Activated B cell treated with CpG ODN at 0.5 μM for 24 hours (primary cell): ENCODE measurements at regions of chr9 and their contacts with region 1.

Region 1: DNA sequence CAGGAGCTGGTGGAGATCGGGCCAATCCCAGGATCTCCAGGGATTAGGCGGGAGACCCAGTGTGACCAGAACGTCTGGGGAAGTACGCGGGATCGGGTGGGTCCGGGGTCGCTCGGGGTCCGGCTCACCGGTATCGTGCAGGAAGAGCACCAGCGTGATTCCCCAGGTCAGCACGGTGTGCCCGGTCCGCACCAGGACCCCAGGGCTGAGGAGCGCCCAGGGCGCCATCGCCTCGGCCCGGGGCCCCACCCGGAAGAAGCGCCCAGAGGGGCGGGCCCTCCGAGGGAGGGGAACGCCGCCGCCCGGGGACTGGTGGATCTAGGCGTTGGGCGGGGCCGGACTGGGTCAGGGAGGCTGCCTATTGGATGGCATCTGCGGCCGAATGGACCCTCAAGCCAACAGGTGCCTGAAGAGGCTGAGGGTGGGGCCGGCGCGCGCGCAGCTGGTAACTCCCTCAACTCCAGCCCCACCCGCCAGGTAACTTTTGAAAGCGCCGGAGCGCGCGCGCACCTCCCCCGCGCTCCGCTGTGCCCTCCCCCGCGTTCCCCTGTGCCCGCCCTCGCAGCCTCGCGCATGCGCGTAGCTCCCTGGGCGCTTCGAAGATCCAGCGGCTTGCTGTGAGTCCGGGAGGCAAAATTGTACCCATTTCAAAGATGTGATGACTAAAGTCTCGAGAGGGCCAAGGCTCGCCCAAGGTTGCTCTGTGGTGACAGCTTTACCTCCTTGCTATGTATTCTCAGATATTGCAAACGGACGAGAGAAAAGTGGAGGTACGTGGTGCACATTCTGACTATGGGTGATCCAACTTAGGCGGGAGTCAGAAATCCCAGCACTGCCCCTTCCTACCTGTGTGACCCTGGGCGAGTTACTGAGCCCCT is at the start of gene ZDHHC12:
- DNase-seq: peak; percentile 96
- ATAC-seq: peak; percentile 97
- H3K4me3 Mint-ChIP-seq: peak within 1 kb of the TSS; percentile 92
- H3K27ac Mint-ChIP-seq: peak within 1 kb of the TSS; percentile 89
- H3K4me1 Mint-ChIP-seq: peaks cover 28% of the 10 kb centered on the region
- H3K27me3 Mint-ChIP-seq: no peaks in the 10 kb centered on the region
- CTCF ChIP-seq: no peak
- total RNA-seq, gene ZDHHC12: 40.0 and 40.7 TPM in 2 replicates

Region 2: GRCh38 chr9:128055344-128056040 is 668.6 kb before region 1 on chr9:
- CTCF ChIA-PET with region 1: no interaction called
- POLR2A ChIA-PET with region 1: no interaction called
- intact Hi-C with region 1: no loop called
- DNase-seq: no peak
- ATAC-seq: no peak
- H3K4me3 Mint-ChIP-seq: no peak overlapping the region
- H3K27ac Mint-ChIP-seq: no peak overlapping the region
- H3K4me1 Mint-ChIP-seq: no peaks in the 10 kb centered on the region
- H3K27me3 Mint-ChIP-seq: no peaks in the 10 kb centered on the region
- CTCF ChIP-seq: no peak

Region 3: DNA sequence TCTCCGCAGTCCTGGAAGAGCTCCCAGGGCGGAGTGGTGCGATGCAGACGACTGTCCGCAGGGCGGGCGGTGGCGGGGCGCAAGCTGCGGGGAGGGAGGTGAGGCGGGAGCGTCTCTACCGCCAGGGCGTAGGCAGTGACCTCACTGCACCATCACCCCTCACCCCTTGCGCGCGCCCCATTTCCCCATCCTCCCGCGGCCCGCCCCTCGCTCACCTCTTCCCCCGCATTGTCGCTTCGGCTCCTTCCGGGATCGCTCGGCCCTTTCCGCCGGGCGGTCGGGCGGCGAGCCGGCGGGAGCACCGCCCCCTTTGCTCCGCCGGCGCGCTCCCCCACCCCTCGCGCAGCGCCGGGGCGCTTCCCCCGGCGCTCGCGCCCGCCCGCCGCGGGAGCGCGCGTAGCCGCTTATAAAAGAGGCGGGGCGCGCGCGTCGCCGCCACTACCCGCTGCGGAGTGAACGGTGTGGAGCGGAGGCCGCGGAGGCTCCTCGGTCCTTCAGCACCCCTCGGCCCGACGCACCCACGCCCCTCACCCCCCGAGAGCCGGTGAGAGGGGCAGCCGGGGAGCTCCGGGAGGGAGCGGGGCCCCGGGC is 171.9 kb before region 1 on chr9 and contains the start of gene SPTAN1:
- CTCF ChIA-PET with region 1: no interaction called
- POLR2A ChIA-PET with region 1: interaction called, 7 read pairs
- intact Hi-C with region 1: loop called (anchors 1 kb)
- DNase-seq: peak; percentile 94
- ATAC-seq: peak; percentile 92
- H3K4me3 Mint-ChIP-seq: peak within 1 kb of the TSS; percentile 90
- H3K27ac Mint-ChIP-seq: peak within 1 kb of the TSS; percentile 90
- H3K4me1 Mint-ChIP-seq: peaks cover 22% of the 10 kb centered on the region
- H3K27me3 Mint-ChIP-seq: no peaks in the 10 kb centered on the region
- CTCF ChIP-seq: no peak
- total RNA-seq, gene SPTAN1: 208 and 237 TPM in 2 replicates

Region 4: GRCh38 chr9:128656416-128657343 is 67.4 kb before region 1 on chr9 and contains the start of gene DYNC2I2:
- CTCF ChIA-PET with region 1: no interaction called
- POLR2A ChIA-PET with region 1: interaction called, 4 read pairs
- intact Hi-C with region 1: loop called (anchors 2 kb)
- DNase-seq: peak; percentile 80
- ATAC-seq: peak; percentile 73
- H3K4me3 Mint-ChIP-seq: peak within 1 kb of the TSS; percentile 92
- H3K27ac Mint-ChIP-seq: peak within 1 kb of the TSS; percentile 99
- H3K4me1 Mint-ChIP-seq: peaks cover 18% of the 10 kb centered on the region
- H3K27me3 Mint-ChIP-seq: no peaks in the 10 kb centered on the region
- CTCF ChIP-seq: no peak
- total RNA-seq, gene DYNC2I2: 58.0 and 60.2 TPM in 2 replicates

Region 5: DNA sequence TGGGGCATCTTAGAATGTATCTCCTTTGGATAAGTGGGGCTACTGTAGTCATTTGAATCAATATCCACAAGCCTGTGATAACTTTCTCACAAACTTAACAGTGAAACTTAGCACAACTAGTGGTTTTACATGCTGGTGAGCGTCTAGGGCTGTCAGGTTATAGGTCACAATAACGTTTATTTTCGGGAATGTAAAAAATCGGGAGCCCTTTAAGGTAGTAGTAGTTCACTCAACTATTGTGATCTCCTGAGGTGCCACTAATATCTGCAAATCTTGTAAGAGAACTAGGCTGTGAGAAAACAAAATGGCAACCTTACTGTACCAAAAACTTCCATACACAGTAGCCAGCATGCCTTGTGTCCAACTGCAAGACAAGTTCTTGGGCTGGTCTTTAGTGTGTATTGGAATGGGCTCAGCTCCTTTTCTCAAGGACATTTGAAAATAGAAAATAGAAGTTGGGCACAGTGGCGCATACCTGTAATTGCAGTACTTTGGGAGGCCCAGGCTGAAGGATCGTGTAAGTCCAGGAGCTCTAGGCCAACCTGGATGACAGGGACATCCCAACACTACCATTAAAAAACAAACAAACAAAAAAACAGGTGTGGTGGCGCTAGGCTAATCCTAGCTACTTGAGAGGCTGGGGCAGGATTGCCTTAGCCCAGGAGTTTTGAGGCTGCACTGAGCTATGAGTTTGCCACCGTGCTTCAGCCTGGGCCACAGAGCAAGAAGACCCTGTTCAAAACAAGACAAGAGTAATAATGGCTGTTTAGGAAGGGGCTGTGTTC is 27.0 kb before region 1 on chr9:
- CTCF ChIA-PET with region 1: interaction called, 5 read pairs
- POLR2A ChIA-PET with region 1: interaction called, 18 read pairs
- intact Hi-C with region 1: loop called (anchors 1 kb)
- DNase-seq: no peak
- ATAC-seq: no peak
- H3K4me3 Mint-ChIP-seq: no peak overlapping the region
- H3K27ac Mint-ChIP-seq: peak overlapping the region; percentile 12
- H3K4me1 Mint-ChIP-seq: peaks cover 41% of the 10 kb centered on the region
- H3K27me3 Mint-ChIP-seq: no peaks in the 10 kb centered on the region
- CTCF ChIP-seq: no peak

Region 6: DNA sequence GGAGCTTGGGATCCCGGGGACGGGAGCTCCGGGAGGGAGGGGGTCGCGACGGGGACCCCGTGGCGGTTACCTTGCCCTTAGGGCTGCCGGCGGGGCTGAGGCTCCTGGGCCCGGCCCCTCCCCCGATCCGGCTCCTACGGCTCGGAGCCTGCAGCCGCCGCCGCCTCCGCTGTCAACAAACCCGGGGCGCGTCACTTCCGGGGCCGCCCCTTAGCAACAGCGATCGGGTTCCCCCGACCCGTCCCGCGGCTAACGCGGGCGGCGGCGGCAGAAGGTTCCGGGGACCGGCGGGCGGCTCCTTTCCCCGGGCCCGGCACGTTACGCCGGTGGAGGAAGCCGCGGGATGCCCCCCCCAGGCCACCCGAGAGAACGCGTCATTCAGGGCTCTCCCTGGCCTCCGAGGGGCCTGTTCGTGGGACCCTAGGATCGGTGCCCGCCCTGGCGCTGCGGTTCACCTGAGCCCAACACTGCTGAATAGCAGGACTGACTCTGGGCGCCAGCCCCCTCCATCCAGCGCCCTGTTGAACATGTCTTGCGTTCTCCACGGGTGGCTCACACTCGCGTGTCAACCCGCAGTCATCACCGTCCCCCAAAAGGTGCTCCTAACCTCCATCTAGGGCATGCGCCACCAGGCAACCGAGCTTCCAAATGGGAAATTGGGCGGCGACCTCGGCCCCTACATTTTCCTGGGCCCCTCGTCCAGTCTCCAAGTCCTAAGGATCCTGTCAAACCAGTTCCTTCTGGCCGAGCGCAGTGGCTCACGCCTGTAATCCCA is 47.8 kb after region 1 on chr9 and contains the start of gene ZER1:
- CTCF ChIA-PET with region 1: no interaction called
- POLR2A ChIA-PET with region 1: interaction called, 11 read pairs
- intact Hi-C with region 1: loop called (anchors 1 kb)
- DNase-seq: peak; percentile 96
- ATAC-seq: peak; percentile 93
- H3K4me3 Mint-ChIP-seq: peak within 1 kb of the TSS; percentile 92
- H3K27ac Mint-ChIP-seq: peak within 1 kb of the TSS; percentile 89
- H3K4me1 Mint-ChIP-seq: peaks cover 24% of the 10 kb centered on the region
- H3K27me3 Mint-ChIP-seq: no peaks in the 10 kb centered on the region
- CTCF ChIP-seq: no peak
- total RNA-seq, gene ZER1: 24.0 and 26.0 TPM in 2 replicates

Region 7: GRCh38 chr9:128818099-128818838 is 94.2 kb after region 1 on chr9 and contains the start of gene ENDOG:
- CTCF ChIA-PET with region 1: no interaction called
- POLR2A ChIA-PET with region 1: interaction called, 6 read pairs
- intact Hi-C with region 1: loop called (anchors 1 kb)
- DNase-seq: peak; percentile 98
- ATAC-seq: peak; percentile 95
- H3K4me3 Mint-ChIP-seq: peak within 1 kb of the TSS; percentile 87
- H3K27ac Mint-ChIP-seq: peak within 1 kb of the TSS; percentile 87
- H3K4me1 Mint-ChIP-seq: peaks cover 15% of the 10 kb centered on the region
- H3K27me3 Mint-ChIP-seq: no peaks in the 10 kb centered on the region
- CTCF ChIP-seq: no peak
- total RNA-seq, gene ENDOG: 14.6 and 16.9 TPM in 2 replicates